Mammary epithelial cell (primary cell): ENCODE measurements at regions of chr5 and their contacts with region 1.

Region 1: DNA sequence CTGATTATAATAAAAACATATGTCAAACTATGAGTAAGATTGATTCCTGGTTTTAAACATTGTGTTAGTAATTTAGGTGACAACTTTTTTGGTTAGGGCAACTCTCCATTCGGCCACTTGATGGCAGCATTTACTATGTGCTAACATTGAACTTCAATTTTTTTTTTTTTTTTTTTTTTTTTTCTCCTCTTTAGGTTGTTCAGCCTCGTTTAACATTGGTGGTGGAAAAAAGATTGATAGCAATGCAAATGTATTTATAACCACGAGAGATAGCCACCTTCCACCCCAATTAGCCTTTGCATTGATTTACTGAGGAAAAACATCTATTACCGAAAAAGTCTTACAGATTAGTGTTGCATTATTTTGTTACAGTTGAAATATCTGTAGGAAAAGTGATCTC is 159.1 kb downstream of the CSNK1G3 start:
- DNase-seq: peak; percentile 23
- H3K4me3 ChIP-seq: no peak overlapping the region
- H3K27ac ChIP-seq: no peak overlapping the region
- H3K4me1 ChIP-seq: no peaks in the 10 kb centered on the region
- H3K27me3 ChIP-seq: no peaks in the 10 kb centered on the region
- CTCF ChIP-seq: peak; percentile 67 to 80

Region 2: GRCh38 chr5:123916331-123917121 is 245.5 kb after region 1 on chr5:
- CTCF ChIA-PET with region 1: no interaction called
- dilution Hi-C with region 1: no loop called
- in situ Hi-C with region 1: loop called in 1 of 2 experiments (anchors 25 kb)
- intact Hi-C with region 1: no loop called
- DNase-seq: peak; percentile 38
- H3K4me3 ChIP-seq: no peak overlapping the region
- H3K27ac ChIP-seq: no peak overlapping the region
- H3K4me1 ChIP-seq: peaks cover 9% of the 10 kb centered on the region
- H3K27me3 ChIP-seq: no peaks in the 10 kb centered on the region
- CTCF ChIP-seq: no peak